ENCODE measurements at regions of chr2 and their contacts with region 1.

Region 1: DNA sequence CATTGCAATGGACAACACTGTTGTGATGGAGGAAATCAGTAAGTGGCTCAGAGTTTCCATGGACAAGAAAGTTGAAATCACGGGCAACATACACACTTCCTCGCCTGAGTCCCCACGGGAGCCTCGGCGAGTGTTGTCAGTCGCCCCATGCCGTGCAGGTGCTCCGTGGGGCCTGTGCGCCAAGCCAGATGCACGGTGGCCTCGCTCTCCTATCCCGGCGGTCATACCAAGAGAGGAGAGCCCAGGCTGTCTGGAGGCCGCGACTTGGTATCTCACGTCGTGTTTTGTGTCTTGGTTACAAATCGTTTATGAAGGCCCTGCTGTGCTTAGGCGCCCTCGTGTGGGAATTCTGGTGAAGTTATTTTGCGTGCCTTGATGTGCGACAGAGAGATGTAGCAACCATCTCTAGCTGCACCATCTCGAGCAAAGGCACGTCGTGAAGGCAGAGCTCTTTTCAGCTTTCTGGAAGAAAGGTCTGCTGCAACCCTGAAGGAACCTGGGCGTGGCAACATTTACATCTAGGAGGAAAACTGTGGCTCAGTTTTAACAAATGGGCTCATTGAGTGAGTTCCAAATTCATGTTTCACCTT is 21.8 kb downstream of the ATG4B start:
- DNase-seq: peak; percentile 84
- H3K4me3 ChIP-seq: no peak overlapping the region
- H3K27ac ChIP-seq: no peak overlapping the region
- H3K4me1 ChIP-seq: no peaks in the 10 kb centered on the region
- H3K27me3 ChIP-seq: no peaks in the 10 kb centered on the region
- CTCF ChIP-seq: peak; percentile 83

Region 2: DNA sequence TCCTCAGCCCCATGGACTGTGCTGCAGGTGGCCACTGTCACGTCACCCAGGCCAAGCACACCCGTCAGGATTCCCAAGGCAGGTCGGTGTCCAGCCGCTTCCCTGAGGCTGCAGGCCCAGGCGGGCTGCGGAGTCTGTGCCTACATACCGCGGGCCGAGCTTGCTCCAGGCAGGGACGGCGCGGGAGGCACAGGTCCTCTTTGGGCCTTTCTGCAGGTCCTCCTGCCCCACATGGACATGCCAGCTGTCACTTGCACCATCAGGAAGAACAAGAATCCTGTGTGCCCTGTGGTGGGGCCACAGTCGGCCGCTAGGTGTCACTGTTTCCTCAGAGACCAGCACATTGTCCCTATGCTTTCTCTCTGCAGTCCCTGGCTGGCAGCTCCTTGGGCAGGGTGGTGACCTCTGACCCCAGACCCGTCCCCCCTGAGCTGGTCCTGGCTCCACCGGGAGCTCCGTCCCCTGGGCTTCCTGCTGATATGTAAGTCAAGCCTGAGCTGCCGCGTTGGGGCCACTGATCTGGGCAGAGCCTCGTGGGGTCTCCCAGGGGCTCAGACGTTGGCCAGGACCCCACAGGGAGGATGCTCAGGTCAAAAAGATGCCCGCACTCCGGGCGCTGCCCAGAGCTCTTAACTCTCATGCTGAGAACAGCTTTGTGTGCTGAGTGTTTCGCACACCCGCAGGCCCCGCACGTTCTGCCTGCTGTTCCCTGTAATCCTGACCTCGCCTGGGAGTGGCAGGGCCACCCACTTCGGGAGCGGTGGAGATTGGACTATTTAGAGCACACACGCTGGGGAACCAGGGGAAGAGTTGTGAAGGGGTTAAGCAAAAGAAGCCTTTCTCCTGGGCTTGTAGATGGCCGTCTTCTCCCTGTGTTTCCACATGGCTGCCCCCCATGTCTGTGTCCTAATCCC is 807.9 kb before region 1 on chr2:
- CTCF ChIA-PET with region 1: no interaction called
- POLR2A ChIA-PET with region 1: no interaction called
- intact Hi-C with region 1: loop called (anchors 5 kb)
- DNase-seq: peak; percentile 81
- H3K4me3 ChIP-seq: no peak overlapping the region
- H3K27ac ChIP-seq: no peak overlapping the region
- H3K4me1 ChIP-seq: no peaks in the 10 kb centered on the region
- H3K27me3 ChIP-seq: no peaks in the 10 kb centered on the region
- CTCF ChIP-seq: peak; percentile 95

Region 3: GRCh38 chr2:241508240-241509154 is 150.7 kb before region 1 on chr2 and contains the start of gene STK25:
- CTCF ChIA-PET with region 1: no interaction called
- POLR2A ChIA-PET with region 1: no interaction called
- intact Hi-C with region 1: no loop called
- DNase-seq: peak; percentile 100
- H3K4me3 ChIP-seq: peak within 1 kb of the TSS; percentile 98
- H3K27ac ChIP-seq: peak within 1 kb of the TSS; percentile 87
- H3K4me1 ChIP-seq: peaks cover 18% of the 10 kb centered on the region
- H3K27me3 ChIP-seq: no peaks in the 10 kb centered on the region
- CTCF ChIP-seq: no peak
- total RNA-seq, gene STK25: 171 and 190 TPM in 2 replicates

Region 4: GRCh38 chr2:241750076-241750840 is 91.0 kb after region 1 on chr2:
- CTCF ChIA-PET with region 1: no interaction called
- POLR2A ChIA-PET with region 1: no interaction called
- intact Hi-C with region 1: no loop called
- DNase-seq: no peak
- H3K4me3 ChIP-seq: no peak overlapping the region
- H3K27ac ChIP-seq: no peak overlapping the region
- H3K4me1 ChIP-seq: no peaks in the 10 kb centered on the region
- H3K27me3 ChIP-seq: no peaks in the 10 kb centered on the region
- CTCF ChIP-seq: no peak

Region 5: GRCh38 chr2:241817126-241817820 is 158.0 kb after region 1 on chr2:
- CTCF ChIA-PET with region 1: no interaction called
- POLR2A ChIA-PET with region 1: no interaction called
- intact Hi-C with region 1: no loop called
- DNase-seq: no peak
- H3K4me3 ChIP-seq: no peak overlapping the region
- H3K27ac ChIP-seq: peak overlapping the region; percentile 100
- H3K4me1 ChIP-seq: peaks cover 63% of the 10 kb centered on the region
- H3K27me3 ChIP-seq: no peaks in the 10 kb centered on the region
- CTCF ChIP-seq: no peak